ENCODE measurements at regions of chr11 and their contacts with region 1.

Region 1: DNA sequence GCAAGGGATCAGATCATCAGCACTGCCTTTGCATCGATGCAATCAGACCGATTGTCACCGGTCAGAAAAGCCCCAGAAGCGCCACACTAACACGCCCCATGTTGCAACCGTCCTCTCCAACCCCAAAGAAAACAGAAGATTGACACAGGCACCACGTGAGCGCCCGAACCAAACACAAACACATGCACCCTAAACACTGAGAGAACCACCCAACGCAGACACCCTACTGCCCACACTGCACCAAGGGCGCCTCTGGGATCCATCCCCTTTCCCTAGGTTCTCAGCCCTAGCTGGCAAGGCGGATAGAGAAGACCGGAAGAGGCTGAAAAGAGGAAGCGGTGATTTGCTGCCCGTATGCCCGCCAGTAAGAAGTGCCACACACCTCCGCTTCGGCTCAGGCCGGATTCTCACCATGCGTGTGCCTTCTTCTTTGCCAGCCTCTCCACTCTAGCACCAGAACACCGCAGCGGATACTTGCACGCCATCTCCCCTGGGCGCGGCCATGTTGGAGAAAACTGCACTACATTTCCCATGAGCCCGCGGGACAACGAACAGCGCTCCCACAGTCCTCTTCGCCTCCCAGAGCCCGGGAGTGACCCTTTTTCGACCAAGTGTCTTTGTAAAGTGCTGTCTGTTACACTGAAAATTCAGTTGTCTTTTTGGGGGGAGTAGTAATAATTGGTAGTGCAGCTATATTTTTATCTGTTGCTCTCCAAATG is at the start of gene ALKBH8:
- DNase-seq: peak; percentile 50
- ATAC-seq: peak; percentile 89
- H3K4me3 ChIP-seq: peak within 1 kb of the TSS; percentile 71
- H3K27ac ChIP-seq: peak within 1 kb of the TSS; percentile 89
- H3K4me1 ChIP-seq: peaks cover 25% of the 10 kb centered on the region
- H3K27me3 ChIP-seq: no peaks in the 10 kb centered on the region
- CTCF ChIP-seq: no peak; a peak in 1 of 6 replicates
- EP300 ChIP-seq: no peak
- POLR2A ChIP-seq: peak; percentile 73
- RAD21 ChIP-seq: no peak
- polyA plus RNA-seq, gene ALKBH8: 4.6 to 4.7 TPM

Region 2: DNA sequence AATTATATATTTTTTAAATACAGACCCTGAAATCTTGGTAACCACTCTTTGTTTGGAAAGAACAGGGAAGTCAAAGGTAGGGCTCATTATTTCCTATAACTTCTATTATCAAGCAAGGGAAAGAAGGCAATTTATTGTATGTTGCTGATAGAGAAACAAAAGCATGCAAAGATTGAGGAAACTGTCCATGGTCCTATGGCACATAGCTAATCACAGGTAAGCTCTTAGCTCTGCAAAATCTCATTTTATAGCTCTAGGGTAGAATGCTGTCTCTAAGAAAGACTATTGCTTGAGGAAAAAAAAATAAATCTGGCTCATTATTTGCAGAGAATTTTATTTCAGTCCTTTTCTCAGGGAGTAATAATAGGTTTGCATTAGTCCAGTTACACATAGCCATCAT is 539.7 kb before region 1 on chr11:
- CTCF ChIA-PET with region 1: no interaction called
- POLR2A ChIA-PET with region 1: no interaction called
- RAD21 ChIA-PET with region 1: no interaction called
- SMC1A ChIA-PET with region 1: no interaction called
- in situ Hi-C with region 1: no loop called
- intact Hi-C with region 1: no loop called
- DNase-seq: no peak
- ATAC-seq: no peak
- H3K4me3 ChIP-seq: no peak overlapping the region
- H3K27ac ChIP-seq: no peak overlapping the region
- H3K4me1 ChIP-seq: no peaks in the 10 kb centered on the region
- H3K27me3 ChIP-seq: no peaks in the 10 kb centered on the region
- CTCF ChIP-seq: no peak
- EP300 ChIP-seq: no peak
- POLR2A ChIP-seq: no peak
- RAD21 ChIP-seq: no peak

Region 3: DNA sequence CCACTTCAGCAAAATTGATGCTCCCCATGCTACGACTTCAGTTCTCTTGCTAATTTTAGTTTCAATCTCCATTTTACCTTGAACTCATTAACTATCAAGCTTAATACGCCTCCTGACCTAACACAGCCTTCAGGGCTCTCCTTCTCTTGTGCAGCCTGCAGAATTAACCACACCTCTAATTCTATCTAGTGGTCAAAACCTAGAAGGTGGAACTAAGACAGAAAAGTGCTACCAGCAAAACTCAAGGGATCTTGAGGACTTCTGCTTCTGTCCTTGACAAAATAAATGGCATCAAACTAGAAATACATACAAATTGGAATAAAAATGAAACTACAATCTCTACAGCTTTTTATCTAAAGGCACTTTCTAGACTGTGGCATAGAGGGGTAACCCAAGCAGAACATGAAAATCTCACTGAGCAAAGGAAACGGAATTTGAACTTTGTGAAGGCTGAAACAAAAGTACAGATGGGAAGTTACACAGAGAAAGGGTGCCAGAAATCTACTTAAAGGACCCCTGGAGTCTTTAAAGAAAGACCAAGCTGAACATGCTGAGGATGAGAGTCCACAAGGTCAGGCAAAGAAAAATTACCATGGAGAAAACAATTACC is 118.5 kb before region 1 on chr11:
- CTCF ChIA-PET with region 1: no interaction called
- POLR2A ChIA-PET with region 1: no interaction called
- RAD21 ChIA-PET with region 1: no interaction called
- SMC1A ChIA-PET with region 1: no interaction called
- in situ Hi-C with region 1: no loop called
- intact Hi-C with region 1: no loop called
- DNase-seq: no peak
- ATAC-seq: peak; percentile 54
- H3K4me3 ChIP-seq: no peak overlapping the region
- H3K27ac ChIP-seq: no peak overlapping the region
- H3K4me1 ChIP-seq: no peaks in the 10 kb centered on the region
- H3K27me3 ChIP-seq: no peaks in the 10 kb centered on the region
- CTCF ChIP-seq: no peak
- EP300 ChIP-seq: no peak
- POLR2A ChIP-seq: no peak
- RAD21 ChIP-seq: no peak

Region 4: DNA sequence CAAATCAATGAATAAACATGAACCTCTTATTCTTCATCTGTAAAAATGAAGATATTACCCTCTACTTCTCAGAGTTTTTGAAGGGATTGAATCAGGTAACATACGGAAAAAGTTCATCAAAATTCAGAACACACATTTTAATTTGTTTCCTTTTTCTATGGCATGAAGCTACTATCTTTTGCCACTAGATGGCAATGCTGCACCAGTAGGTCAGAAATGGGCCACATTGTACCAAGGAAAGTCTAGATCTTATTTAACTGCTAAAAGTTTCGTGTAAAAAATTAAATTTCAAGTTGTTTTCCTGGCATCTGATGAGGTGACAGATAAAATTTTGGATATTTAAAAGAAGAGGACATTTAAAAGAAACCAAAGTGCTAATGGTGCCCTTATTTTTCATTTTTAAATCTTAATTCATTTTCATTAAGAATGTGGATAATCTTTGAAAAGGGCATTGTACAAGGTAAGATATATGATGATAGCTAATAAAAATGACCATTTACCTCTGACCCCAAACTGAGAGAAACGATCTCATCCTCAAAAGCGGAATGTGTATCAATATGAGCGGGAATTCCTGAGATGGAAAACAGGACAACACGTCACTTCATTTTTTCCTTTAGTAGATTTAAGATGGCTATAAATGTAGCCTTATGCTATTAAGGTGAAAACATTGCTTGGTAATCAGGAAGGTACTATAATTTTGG is 16.0 kb before region 1 on chr11:
- CTCF ChIA-PET with region 1: interaction called, 311 read pairs
- POLR2A ChIA-PET with region 1: interaction called, 4 read pairs
- RAD21 ChIA-PET with region 1: interaction called, 33 read pairs
- SMC1A ChIA-PET with region 1: interaction called, 66 read pairs
- in situ Hi-C with region 1: no loop called
- intact Hi-C with region 1: no loop called
- DNase-seq: no peak
- ATAC-seq: peak; percentile 78
- H3K4me3 ChIP-seq: no peak overlapping the region
- H3K27ac ChIP-seq: no peak overlapping the region
- H3K4me1 ChIP-seq: no peaks in the 10 kb centered on the region
- H3K27me3 ChIP-seq: no peaks in the 10 kb centered on the region
- CTCF ChIP-seq: peak; percentile 67 to 74 (median 71)
- EP300 ChIP-seq: no peak
- POLR2A ChIP-seq: no peak
- RAD21 ChIP-seq: peak; percentile 81

Region 5: DNA sequence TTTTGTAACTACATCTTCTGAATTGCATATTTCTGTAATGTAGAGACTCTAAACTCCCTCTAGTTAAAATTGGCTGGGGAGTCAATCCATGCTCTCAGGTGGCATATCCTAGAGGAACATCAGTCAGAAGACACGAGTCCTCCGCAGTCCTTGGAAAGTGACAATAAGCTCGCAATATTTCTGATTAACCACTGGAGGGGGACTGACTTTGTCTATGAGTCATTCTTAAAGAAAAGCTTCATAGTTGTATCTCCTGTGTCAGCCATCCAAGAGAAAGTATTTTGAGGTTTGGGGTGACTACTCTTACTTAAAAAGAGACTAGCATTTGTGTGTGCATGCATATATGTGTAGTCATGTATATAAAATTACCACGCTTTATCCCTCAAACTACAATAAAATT is 86.3 kb after region 1 on chr11:
- CTCF ChIA-PET with region 1: interaction called, 11 read pairs
- POLR2A ChIA-PET with region 1: no interaction called
- RAD21 ChIA-PET with region 1: no interaction called
- SMC1A ChIA-PET with region 1: interaction called, 3 read pairs
- in situ Hi-C with region 1: no loop called
- intact Hi-C with region 1: no loop called
- DNase-seq: no peak
- ATAC-seq: peak; percentile 32; the same call in 1 of the 3 replicates
- H3K4me3 ChIP-seq: no peak overlapping the region
- H3K27ac ChIP-seq: no peak overlapping the region
- H3K4me1 ChIP-seq: no peaks in the 10 kb centered on the region
- H3K27me3 ChIP-seq: peaks cover 0 to 3% of the 10 kb centered on the region in 2 experiments; a peak in 2 of 4 replicates
- CTCF ChIP-seq: no peak
- EP300 ChIP-seq: no peak
- POLR2A ChIP-seq: no peak
- RAD21 ChIP-seq: no peak

Region 6: DNA sequence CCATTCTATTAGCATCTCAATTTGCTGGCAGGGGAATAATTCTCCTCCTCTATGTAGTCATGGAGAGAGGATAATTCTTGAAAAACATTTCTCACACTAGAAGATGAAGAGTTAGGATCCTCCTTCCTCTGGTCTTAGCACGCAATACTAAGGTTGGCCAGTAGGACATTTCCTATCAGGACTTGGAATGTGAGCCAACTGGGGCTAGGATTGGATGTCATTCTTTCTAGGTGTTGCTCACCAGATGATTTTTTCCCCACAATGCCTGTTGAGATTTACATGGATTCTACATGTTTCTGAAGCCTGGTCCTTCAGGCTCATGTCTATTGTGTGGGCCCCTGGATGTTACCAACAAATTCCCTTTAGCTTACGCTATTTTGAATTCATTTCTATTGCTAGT is 118.4 kb after region 1 on chr11:
- CTCF ChIA-PET with region 1: interaction called, 536 read pairs
- POLR2A ChIA-PET with region 1: interaction called, 4 read pairs
- RAD21 ChIA-PET with region 1: interaction called, 120 read pairs
- SMC1A ChIA-PET with region 1: interaction called, 249 read pairs
- in situ Hi-C with region 1: no loop called
- intact Hi-C with region 1: loop called (anchors 1 kb)
- DNase-seq: no peak
- ATAC-seq: no peak
- H3K4me3 ChIP-seq: no peak overlapping the region
- H3K27ac ChIP-seq: no peak overlapping the region
- H3K4me1 ChIP-seq: peaks cover 5% of the 10 kb centered on the region; the same call in 1 of the 2 replicates
- H3K27me3 ChIP-seq: no peaks in the 10 kb centered on the region
- CTCF ChIP-seq: peak in 2 of 3 experiments; percentile 41 to 42; a peak in 3 of 6 replicates
- EP300 ChIP-seq: no peak
- POLR2A ChIP-seq: no peak
- RAD21 ChIP-seq: no peak

Region 7: GRCh38 chr11:107770551-107770951 is 205.2 kb after region 1 on chr11:
- CTCF ChIA-PET with region 1: interaction called, 61 read pairs
- POLR2A ChIA-PET with region 1: no interaction called
- RAD21 ChIA-PET with region 1: interaction called, 11 read pairs
- SMC1A ChIA-PET with region 1: interaction called, 14 read pairs
- in situ Hi-C with region 1: no loop called
- intact Hi-C with region 1: loop called (anchors 5 kb)
- DNase-seq: no peak
- ATAC-seq: peak; percentile 41
- H3K4me3 ChIP-seq: no peak overlapping the region
- H3K27ac ChIP-seq: no peak overlapping the region; the same call in 1 of the 2 replicates
- H3K4me1 ChIP-seq: 0 out of 2 replicates have a peak, but pooled peaks cover 4% of the 10 kb centered on the region
- H3K27me3 ChIP-seq: no peaks in the 10 kb centered on the region
- CTCF ChIP-seq: no peak
- EP300 ChIP-seq: no peak
- POLR2A ChIP-seq: no peak
- RAD21 ChIP-seq: no peak

Region 8: DNA sequence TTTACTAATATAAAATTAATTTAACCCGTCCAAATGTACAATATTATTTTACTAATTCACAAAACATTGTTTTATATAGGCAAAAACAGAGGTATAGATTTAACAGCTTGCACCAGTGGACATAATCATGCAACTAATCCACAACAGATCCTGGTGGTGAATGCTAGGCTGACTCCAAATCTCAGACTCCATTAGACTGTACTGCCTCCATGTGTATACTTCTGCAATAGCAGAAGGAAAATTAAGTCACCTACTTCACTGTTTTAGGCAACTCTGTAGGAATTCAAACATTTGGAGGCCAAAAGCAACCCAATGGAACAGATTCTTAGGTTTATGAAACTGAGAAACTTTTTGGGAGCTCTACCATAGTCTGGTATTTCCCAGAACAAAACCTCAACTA is 332.9 kb after region 1 on chr11:
- CTCF ChIA-PET with region 1: interaction called, 3 read pairs
- POLR2A ChIA-PET with region 1: no interaction called
- RAD21 ChIA-PET with region 1: interaction called, 3 read pairs
- SMC1A ChIA-PET with region 1: interaction called, 3 read pairs
- in situ Hi-C with region 1: loop called (anchors 10 kb)
- intact Hi-C with region 1: loop called (anchors 10 kb)
- DNase-seq: peak; percentile 24
- ATAC-seq: peak; percentile 93
- H3K4me3 ChIP-seq: no peak overlapping the region
- H3K27ac ChIP-seq: no peak overlapping the region
- H3K4me1 ChIP-seq: no peaks in the 10 kb centered on the region; the same call in 1 of the 2 replicates
- H3K27me3 ChIP-seq: no peaks in the 10 kb centered on the region
- CTCF ChIP-seq: peak; percentile 63 to 82 (median 67); a peak in 5 of 6 replicates
- EP300 ChIP-seq: no peak
- POLR2A ChIP-seq: no peak
- RAD21 ChIP-seq: peak; percentile 92